Mammary epithelial cell (primary cell): ENCODE measurements at regions of chr10 and their contacts with region 1.

Region 1: DNA sequence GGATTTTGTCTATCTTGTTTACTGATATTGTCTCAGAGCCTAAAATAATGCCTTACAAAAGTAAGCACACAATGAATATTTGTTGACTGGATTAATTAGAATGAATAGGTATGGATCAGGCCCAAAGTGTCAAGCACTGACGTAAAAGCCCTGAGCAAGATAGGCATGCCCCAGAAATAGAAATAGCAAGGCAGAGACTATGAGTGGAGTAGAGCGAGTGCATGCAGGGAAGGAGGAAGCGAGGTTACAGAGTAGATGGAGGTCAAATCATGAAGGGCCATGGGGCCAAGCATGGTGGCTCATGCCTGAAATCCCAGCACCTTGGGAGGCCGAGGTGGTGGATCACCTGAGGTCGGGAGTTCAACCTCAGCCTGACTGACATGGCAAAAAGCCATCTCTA is 51.6 kb upstream of the SFTPD start:
- DNase-seq: no peak
- H3K4me3 ChIP-seq: no peak overlapping the region
- H3K27ac ChIP-seq: no peak overlapping the region
- H3K4me1 ChIP-seq: no peaks in the 10 kb centered on the region
- H3K27me3 ChIP-seq: peaks cover 3% of the 10 kb centered on the region
- CTCF ChIP-seq: no peak

Region 2: GRCh38 chr10:79948976-79949722 is 51.4 kb before region 1 on chr10 and contains the start of gene SFTPD:
- CTCF ChIA-PET with region 1: no interaction called
- dilution Hi-C with region 1: loop called (anchors 10 kb)
- in situ Hi-C with region 1: no loop called
- intact Hi-C with region 1: no loop called
- DNase-seq: peak; percentile 72
- H3K4me3 ChIP-seq: no peak within 1 kb of the TSS
- H3K27ac ChIP-seq: no peak within 1 kb of the TSS
- H3K4me1 ChIP-seq: peaks cover 13% of the 10 kb centered on the region
- H3K27me3 ChIP-seq: peaks cover 2% of the 10 kb centered on the region
- CTCF ChIP-seq: no peak
- total RNA-seq, gene SFTPD: 0.33 TPM in 1 of 2 donors, not detected in the other